ENCODE measurements at regions of chr12 and their contacts with region 1.

Region 1: GRCh38 chr12:6825398-6826124 is 2.6 kb upstream of the P3H3 start:
- DNase-seq: peak; percentile 84
- ATAC-seq: peak; percentile 83
- H3K4me3 ChIP-seq: peak overlapping the region; percentile 51; the same call in 1 of the 2 replicates
- H3K27ac ChIP-seq: no peak overlapping the region
- H3K4me1 ChIP-seq: peaks cover 5% of the 10 kb centered on the region; the same call in 1 of the 2 replicates
- H3K27me3 ChIP-seq: no peaks in the 10 kb centered on the region
- CTCF ChIP-seq: peak; percentile 79

Region 2: GRCh38 chr12:6735448-6736191 is 89.9 kb before region 1 on chr12:
- CTCF ChIA-PET with region 1: no interaction called
- POLR2A ChIA-PET with region 1: no interaction called
- intact Hi-C with region 1: loop called (anchors 1 kb)
- DNase-seq: peak; percentile 63
- ATAC-seq: peak; percentile 99
- H3K4me3 ChIP-seq: no peak overlapping the region
- H3K27ac ChIP-seq: peak overlapping the region; percentile 21; the same call in 1 of the 2 replicates
- H3K4me1 ChIP-seq: peaks cover 5% of the 10 kb centered on the region
- H3K27me3 ChIP-seq: no peaks in the 10 kb centered on the region
- CTCF ChIP-seq: peak; percentile 86

Region 3: GRCh38 chr12:6752921-6753771 is 72.4 kb before region 1 on chr12 and contains the start of gene MLF2:
- CTCF ChIA-PET with region 1: no interaction called
- POLR2A ChIA-PET with region 1: no interaction called
- intact Hi-C with region 1: loop called (anchors 1 kb)
- DNase-seq: peak; percentile 95
- ATAC-seq: peak; percentile 92
- H3K4me3 ChIP-seq: peak within 1 kb of the TSS; percentile 91
- H3K27ac ChIP-seq: peak within 1 kb of the TSS; percentile 89
- H3K4me1 ChIP-seq: peaks cover 12% of the 10 kb centered on the region
- H3K27me3 ChIP-seq: no peaks in the 10 kb centered on the region
- CTCF ChIP-seq: peak; percentile 88; the same call in 1 of the 2 replicates
- total RNA-seq, gene MLF2: 222 and 248 TPM in 2 replicates

Region 4: GRCh38 chr12:6965026-6965661 is 139.6 kb after region 1 on chr12:
- CTCF ChIA-PET with region 1: no interaction called
- POLR2A ChIA-PET with region 1: no interaction called
- intact Hi-C with region 1: no loop called
- DNase-seq: peak; percentile 64
- ATAC-seq: peak; percentile 62
- H3K4me3 ChIP-seq: no peak overlapping the region
- H3K27ac ChIP-seq: no peak overlapping the region
- H3K4me1 ChIP-seq: peaks cover 25% of the 10 kb centered on the region
- H3K27me3 ChIP-seq: no peaks in the 10 kb centered on the region
- CTCF ChIP-seq: peak; percentile 77

Measured in PC-3 (cell line).